ENCODE measurements at regions of chr19 and their contacts with region 1.

Region 1: DNA sequence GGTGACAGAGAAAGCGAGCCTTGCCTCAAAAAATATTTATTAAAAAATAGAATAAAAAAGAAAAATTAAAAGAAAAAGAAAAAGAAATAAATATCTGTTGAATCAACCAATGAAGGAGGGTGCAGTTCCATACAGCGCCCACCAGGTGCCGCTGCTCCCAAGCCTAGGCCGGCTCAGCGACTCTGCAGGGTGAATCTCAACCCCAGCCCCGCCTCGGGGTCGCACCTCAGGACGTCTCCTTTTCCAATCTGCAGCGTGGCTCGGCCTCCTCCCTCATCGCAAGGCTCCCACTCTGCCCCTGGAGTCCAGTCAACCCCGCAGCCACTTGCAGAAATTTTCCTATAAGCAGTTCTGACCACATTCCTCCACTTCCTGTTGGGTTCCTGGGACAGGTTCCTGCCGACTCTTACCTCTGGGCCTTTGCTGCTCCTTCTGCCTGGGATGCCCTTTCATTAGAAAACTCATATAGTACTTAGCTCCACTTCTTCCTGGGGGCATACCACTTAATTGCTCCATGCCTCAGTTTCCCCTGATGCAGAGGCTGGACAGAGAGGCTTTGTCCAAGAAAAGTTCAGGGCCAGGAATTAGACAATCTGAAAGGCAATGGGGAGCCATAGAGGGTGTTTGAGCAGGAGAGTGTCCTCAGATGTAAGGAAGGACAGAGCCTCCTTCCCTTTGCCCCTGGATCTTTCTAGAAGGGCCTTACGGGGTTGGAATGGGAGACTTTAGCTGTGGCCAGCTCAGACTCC is 24.3 kb downstream of the NFILZ start:
- DNase-seq: peak; percentile 28 to 74 (median 66)
- ATAC-seq: peak; percentile 91
- H3K4me3 ChIP-seq: peak overlapping the region; percentile 11
- H3K4me3 Mint-ChIP-seq: peak overlapping the region; percentile 46 to 78 (median 69)
- H3K27ac ChIP-seq: no peak overlapping the region
- H3K27ac Mint-ChIP-seq: peak overlapping the region in 2 of 9 donors; percentile 30 to 46
- H3K4me1 ChIP-seq: peaks cover 4 to 6% of the 10 kb centered on the region in 2 donors
- H3K4me1 Mint-ChIP-seq: peaks cover 7 to 20% (median 14%) of the 10 kb centered on the region in 7 donors
- H3K27me3 ChIP-seq: no peaks in the 10 kb centered on the region
- H3K27me3 Mint-ChIP-seq: peaks cover 0 to 14% (median 5%) of the 10 kb centered on the region in 5 donors

Region 2: GRCh38 chr19:8697671-8698432 is 43.1 kb after region 1 on chr19:
- CTCF ChIA-PET with region 1: interaction called, 31 read pairs
- POLR2A ChIA-PET with region 1: no interaction called
- intact Hi-C with region 1: loop called in 1 of 2 experiments (anchors 1 kb)
- DNase-seq: no peak
- ATAC-seq: no peak
- H3K4me3 ChIP-seq: no peak overlapping the region
- H3K4me3 Mint-ChIP-seq: no peak overlapping the region
- H3K27ac ChIP-seq: no peak overlapping the region
- H3K27ac Mint-ChIP-seq: no peak overlapping the region
- H3K4me1 ChIP-seq: peaks cover 26 to 27% of the 10 kb centered on the region in 2 donors
- H3K4me1 Mint-ChIP-seq: peaks cover 21 to 49% (median 24%) of the 10 kb centered on the region in 7 donors
- H3K27me3 ChIP-seq: peaks cover 0 to 4% of the 10 kb centered on the region in 2 donors
- H3K27me3 Mint-ChIP-seq: peaks cover 0 to 21% (median 0%) of the 10 kb centered on the region in 5 donors

Region 3: DNA sequence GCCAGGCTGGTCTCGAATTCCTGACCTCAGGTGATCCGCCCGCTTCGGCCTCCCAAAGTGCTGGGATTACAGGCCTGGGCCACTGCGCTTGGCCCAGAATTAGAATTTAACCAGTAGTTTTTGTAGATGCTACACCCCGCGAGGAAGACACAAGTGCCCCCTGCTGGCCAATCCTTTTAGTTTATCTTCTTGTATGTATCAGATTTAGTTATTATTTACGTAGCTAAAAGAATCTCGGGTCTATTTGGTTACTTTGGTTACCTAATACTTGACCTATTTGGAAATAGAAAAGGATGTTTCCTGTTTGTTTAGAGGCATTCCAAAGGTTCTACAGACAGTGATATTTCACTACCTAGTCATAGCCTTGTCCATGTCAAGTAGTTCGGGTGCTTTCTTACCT is 333.4 kb after region 1 on chr19:
- CTCF ChIA-PET with region 1: no interaction called
- POLR2A ChIA-PET with region 1: no interaction called
- intact Hi-C with region 1: loop called in 1 of 2 experiments (anchors 5 kb)
- DNase-seq: peak in 1 of 9 donors; percentile 8
- ATAC-seq: no peak
- H3K4me3 ChIP-seq: no peak overlapping the region
- H3K4me3 Mint-ChIP-seq: no peak overlapping the region
- H3K27ac ChIP-seq: no peak overlapping the region
- H3K27ac Mint-ChIP-seq: no peak overlapping the region
- H3K4me1 ChIP-seq: no peaks in the 10 kb centered on the region
- H3K4me1 Mint-ChIP-seq: no peaks in the 10 kb centered on the region
- H3K27me3 ChIP-seq: no peaks in the 10 kb centered on the region
- H3K27me3 Mint-ChIP-seq: peaks cover 0 to 16% (median 0%) of the 10 kb centered on the region in 5 donors

Region 4: GRCh38 chr19:9075064-9075949 is 420.5 kb after region 1 on chr19:
- CTCF ChIA-PET with region 1: no interaction called
- POLR2A ChIA-PET with region 1: no interaction called
- intact Hi-C with region 1: loop called in 1 of 2 experiments (anchors 1 kb)
- DNase-seq: no peak
- ATAC-seq: no peak
- H3K4me3 ChIP-seq: no peak overlapping the region
- H3K4me3 Mint-ChIP-seq: no peak overlapping the region
- H3K27ac ChIP-seq: no peak overlapping the region
- H3K27ac Mint-ChIP-seq: no peak overlapping the region
- H3K4me1 ChIP-seq: no peaks in the 10 kb centered on the region
- H3K4me1 Mint-ChIP-seq: peaks cover 0 to 6% (median 0%) of the 10 kb centered on the region in 7 donors
- H3K27me3 ChIP-seq: no peaks in the 10 kb centered on the region
- H3K27me3 Mint-ChIP-seq: no peaks in the 10 kb centered on the region